Heart left ventricle (tissue), 16 donors: ENCODE measurements at regions of chr22 and their contacts with region 1.

Region 1: DNA sequence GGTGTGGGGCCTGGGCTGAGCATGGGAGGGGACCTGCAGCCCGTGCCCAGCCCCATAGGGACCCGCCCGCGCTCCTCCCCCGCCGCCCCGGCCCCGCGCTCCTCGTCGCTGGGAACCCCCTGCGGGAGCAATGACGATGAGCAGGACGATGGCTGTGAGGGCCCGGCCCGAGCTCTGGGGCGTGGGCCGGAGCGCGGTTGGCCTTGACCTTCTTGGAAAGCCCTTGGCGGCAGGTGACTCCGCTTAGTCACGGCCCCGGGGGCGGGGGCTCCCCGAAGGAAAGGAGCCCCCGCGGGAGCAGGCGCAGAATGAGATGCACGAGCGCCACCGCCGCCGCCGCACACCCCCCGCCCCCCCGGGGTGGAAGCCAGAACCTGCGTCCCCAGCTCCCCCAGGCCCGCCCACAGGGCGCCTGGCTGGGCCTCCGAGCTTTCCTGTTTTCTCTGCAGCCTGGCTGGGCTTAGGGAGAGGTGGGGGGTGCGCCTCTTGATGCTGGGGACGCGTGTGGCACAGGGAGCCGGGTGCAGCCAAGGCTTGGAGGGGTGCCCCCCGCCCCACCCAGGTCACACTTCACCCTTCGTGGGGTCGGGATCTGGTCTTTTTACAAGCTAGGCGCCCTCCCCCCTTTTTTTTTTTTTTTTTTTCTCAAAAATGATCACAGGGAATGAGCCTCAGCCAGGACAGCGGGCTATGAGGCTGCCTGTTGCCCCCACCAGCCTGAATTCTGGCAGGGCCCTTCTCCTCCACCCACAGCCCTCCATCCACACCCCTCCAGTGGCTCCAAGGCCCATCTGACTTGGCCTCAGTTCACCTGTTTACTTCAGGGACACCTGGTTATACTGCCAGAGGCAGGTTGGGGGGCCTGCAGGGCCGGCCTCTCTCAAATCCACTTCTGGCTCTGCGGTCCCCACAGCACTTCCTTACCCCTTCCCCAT is 17.9 kb downstream of the CRELD2 start:
- DNase-seq: peak; percentile 92 to 97 (median 95)
- ATAC-seq: peak; percentile 13 to 77 (median 72)
- H3K4me3 ChIP-seq: peak overlapping the region in 11 of 12 donors; percentile 12 to 70 (median 48)
- H3K27ac ChIP-seq: peak overlapping the region; percentile 91 to 99 (median 95)
- H3K4me1 ChIP-seq: peaks cover 19 to 70% (median 57%) of the 10 kb centered on the region in 12 donors
- H3K27me3 ChIP-seq: no peaks in the 10 kb centered on the region
- CTCF ChIP-seq: no peak
- POLR2A ChIP-seq: peak in 1 of 2 donors; percentile 38

Region 2: GRCh38 chr22:49960159-49961004 is 24.1 kb after region 1 on chr22 and contains the start of gene PIM3:
- intact Hi-C with region 1: loop called in 8 of 10 experiments (anchors 1 to 5 kb)
- DNase-seq: peak; percentile 96 to 97 (median 96)
- ATAC-seq: peak; percentile 84 to 92 (median 88)
- H3K4me3 ChIP-seq: peak within 1 kb of the TSS; percentile 72 to 99 (median 90)
- H3K27ac ChIP-seq: peak within 1 kb of the TSS; percentile 83 to 100 (median 96)
- H3K4me1 ChIP-seq: peaks cover 16 to 58% (median 41%) of the 10 kb centered on the region in 12 donors
- H3K27me3 ChIP-seq: no peaks in the 10 kb centered on the region
- CTCF ChIP-seq: no peak
- POLR2A ChIP-seq: peak; percentile 23 to 89
- total RNA-seq, gene PIM3: 37.7 to 118 (median 51.0) TPM

Region 3: GRCh38 chr22:49970528-49971231 is 34.4 kb after region 1 on chr22:
- intact Hi-C with region 1: loop called in 7 of 10 experiments (anchors 2 to 5 kb)
- DNase-seq: peak; percentile 90 to 99 (median 95)
- ATAC-seq: peak; percentile 90 to 95 (median 91)
- H3K4me3 ChIP-seq: peak overlapping the region; percentile 22 to 65 (median 54)
- H3K27ac ChIP-seq: peak overlapping the region; percentile 49 to 99 (median 91)
- H3K4me1 ChIP-seq: peaks cover 8 to 67% (median 47%) of the 10 kb centered on the region in 12 donors
- H3K27me3 ChIP-seq: no peaks in the 10 kb centered on the region
- CTCF ChIP-seq: no peak
- POLR2A ChIP-seq: peak in 1 of 2 donors; percentile 88

Region 4: DNA sequence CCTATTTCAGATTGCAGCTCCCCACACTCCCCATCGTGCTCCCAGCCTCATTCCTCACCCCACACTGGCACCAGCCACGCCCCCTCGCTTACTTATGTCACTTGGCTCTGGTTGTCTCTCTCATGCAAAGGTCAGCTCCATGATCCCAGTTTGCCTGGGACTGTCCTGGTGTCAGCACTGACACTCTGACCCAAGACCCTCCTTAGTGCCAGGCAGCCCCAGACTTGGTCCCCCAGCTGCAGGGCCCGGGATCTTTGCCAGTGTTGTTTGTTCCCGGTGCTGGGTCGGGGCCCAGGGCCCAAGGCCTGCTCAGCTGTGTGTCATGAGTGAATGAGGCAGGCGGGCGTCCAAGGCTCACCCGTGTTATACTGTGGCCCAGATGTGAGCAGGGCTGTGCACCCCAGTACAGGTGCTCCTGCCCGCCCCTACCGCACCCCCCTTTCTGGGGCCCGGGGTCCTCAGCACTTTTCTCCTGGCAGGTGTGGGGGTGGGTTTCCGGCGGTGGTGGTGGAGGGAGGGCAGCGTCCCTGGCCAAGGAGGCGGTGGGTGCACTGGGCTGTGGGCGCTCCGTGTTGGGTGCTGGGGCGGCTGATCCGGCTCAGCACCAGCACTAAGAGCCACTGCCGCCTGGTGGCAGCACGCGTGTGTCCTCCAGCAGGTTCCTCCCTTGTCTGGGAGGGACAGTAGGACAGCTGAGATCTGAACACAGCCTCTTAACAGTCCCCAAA is 56.8 kb after region 1 on chr22:
- intact Hi-C with region 1: loop called in 6 of 10 experiments (anchors 2 to 10 kb)
- DNase-seq: peak in 4 of 5 donors; percentile 63 to 84 (median 70)
- ATAC-seq: peak; percentile 59 to 90 (median 84)
- H3K4me3 ChIP-seq: no peak overlapping the region
- H3K27ac ChIP-seq: no peak overlapping the region
- H3K4me1 ChIP-seq: peaks cover 0 to 8% (median 2%) of the 10 kb centered on the region in 12 donors
- H3K27me3 ChIP-seq: no peaks in the 10 kb centered on the region
- CTCF ChIP-seq: peak; percentile 62 to 81 (median 68)
- POLR2A ChIP-seq: no peak

Region 5: DNA sequence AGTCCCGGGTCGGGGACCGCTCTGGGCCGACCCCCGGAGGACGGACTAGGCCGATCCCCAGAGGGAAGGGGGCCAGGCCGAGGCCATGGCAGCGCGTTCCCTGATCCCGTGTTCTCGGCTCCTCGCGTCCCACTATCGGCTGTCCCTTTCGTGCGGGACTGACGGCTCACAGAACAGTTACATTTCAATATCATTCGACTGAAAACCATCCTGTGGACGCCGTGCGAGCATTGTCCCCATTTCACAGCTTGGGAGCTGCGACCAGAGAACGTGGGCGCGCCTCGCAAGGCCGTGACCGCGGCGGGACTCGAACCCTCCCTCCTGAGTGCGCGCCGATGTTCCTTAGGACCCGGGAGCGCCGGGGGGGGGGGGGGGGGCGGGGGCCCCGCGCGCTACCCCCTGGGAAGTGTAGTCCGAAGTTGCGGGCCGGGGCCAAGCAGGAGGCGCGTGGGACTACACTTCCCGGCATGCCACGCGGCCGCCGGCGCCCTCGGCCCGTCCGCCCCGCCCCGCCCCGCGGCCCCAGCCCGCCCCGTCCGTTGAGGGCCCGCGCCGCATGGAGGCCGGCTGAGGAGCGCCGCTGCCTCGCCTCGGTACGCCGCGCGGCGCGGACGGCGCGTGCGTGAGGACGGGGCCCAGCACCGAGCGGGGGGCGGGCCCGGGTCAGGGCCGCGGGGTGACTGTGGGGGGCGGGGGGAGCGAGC is 249.3 kb after region 1 on chr22 and contains the start of gene TRABD:
- intact Hi-C with region 1: loop called in 1 of 10 experiments (anchors 10 kb)
- DNase-seq: peak; percentile 91 to 95 (median 93)
- ATAC-seq: peak; percentile 77 to 83 (median 80)
- H3K4me3 ChIP-seq: peak within 1 kb of the TSS; percentile 47 to 80 (median 68)
- H3K27ac ChIP-seq: peak within 1 kb of the TSS in 11 of 12 donors; percentile 44 to 81 (median 68)
- H3K4me1 ChIP-seq: peaks cover 8 to 67% (median 48%) of the 10 kb centered on the region in 12 donors
- H3K27me3 ChIP-seq: no peaks in the 10 kb centered on the region
- CTCF ChIP-seq: no peak
- POLR2A ChIP-seq: no peak
- total RNA-seq, gene TRABD: 14.3 to 28.1 (median 17.5) TPM